ENCODE measurements at regions of chr17 and their contacts with region 1.

Region 1: GRCh38 chr17:76353599-76354316 is at the start of gene PRPSAP1:
- DNase-seq: peak; percentile 89 to 91
- H3K4me3 ChIP-seq: peak within 1 kb of the TSS; percentile 83
- H3K4me3 Mint-ChIP-seq: peak within 1 kb of the TSS; percentile 94
- H3K27ac Mint-ChIP-seq: peak within 1 kb of the TSS; percentile 97
- H3K4me1 ChIP-seq: peaks cover 15% of the 10 kb centered on the region
- H3K4me1 Mint-ChIP-seq: peaks cover 10% of the 10 kb centered on the region
- H3K27me3 ChIP-seq: no peaks in the 10 kb centered on the region
- H3K27me3 Mint-ChIP-seq: no peaks in the 10 kb centered on the region
- CTCF ChIP-seq: peak; percentile 49 to 59
- total RNA-seq, gene PRPSAP1: 81.3 and 87.6 TPM in 2 replicates

Region 2: GRCh38 chr17:76341301-76341700 is 12.5 kb before region 1 on chr17:
- CTCF ChIA-PET with region 1: no interaction called
- POLR2A ChIA-PET with region 1: no interaction called
- intact Hi-C with region 1: loop called (anchors 1 kb)
- DNase-seq: no peak
- H3K4me3 ChIP-seq: no peak overlapping the region
- H3K4me3 Mint-ChIP-seq: no peak overlapping the region
- H3K27ac Mint-ChIP-seq: no peak overlapping the region
- H3K4me1 ChIP-seq: no peaks in the 10 kb centered on the region
- H3K4me1 Mint-ChIP-seq: no peaks in the 10 kb centered on the region
- H3K27me3 ChIP-seq: no peaks in the 10 kb centered on the region
- H3K27me3 Mint-ChIP-seq: no peaks in the 10 kb centered on the region
- CTCF ChIP-seq: no peak

Region 3: GRCh38 chr17:76414334-76415295 is 60.9 kb after region 1 on chr17:
- CTCF ChIA-PET with region 1: no interaction called
- POLR2A ChIA-PET with region 1: no interaction called
- intact Hi-C with region 1: no loop called
- DNase-seq: no peak
- H3K4me3 ChIP-seq: no peak overlapping the region
- H3K4me3 Mint-ChIP-seq: no peak overlapping the region
- H3K27ac Mint-ChIP-seq: no peak overlapping the region
- H3K4me1 ChIP-seq: no peaks in the 10 kb centered on the region
- H3K4me1 Mint-ChIP-seq: peaks cover 3% of the 10 kb centered on the region
- H3K27me3 ChIP-seq: no peaks in the 10 kb centered on the region
- H3K27me3 Mint-ChIP-seq: no peaks in the 10 kb centered on the region
- CTCF ChIP-seq: no peak

Measured in Caco-2 (cell line).